SK-N-SH (cell line): ENCODE measurements at regions of chr15 and their contacts with region 1.

Region 1: DNA sequence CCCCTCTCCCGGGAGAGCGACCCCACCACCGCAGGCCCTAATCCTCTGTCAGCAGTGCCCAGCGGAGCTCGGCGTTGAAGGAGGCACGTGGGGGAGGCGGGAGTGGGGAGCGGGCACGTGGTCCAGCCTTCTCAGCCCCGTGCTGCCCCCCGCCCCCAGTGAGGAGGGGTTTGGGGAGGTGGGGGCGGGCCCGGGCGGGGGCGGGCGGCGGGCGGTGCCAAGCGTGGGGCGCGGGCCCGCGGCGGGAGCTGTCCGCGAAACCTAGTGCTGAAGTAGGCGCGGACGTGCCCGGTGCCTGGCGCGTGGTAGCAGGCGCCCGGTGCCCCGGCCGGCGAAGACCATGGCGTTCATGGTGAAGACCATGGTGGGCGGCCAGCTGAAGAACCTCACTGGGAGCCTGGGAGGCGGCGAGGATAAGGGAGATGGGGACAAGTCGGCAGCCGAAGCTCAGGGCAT is at the start of gene CPLX3:
- DNase-seq: peak; percentile 62
- H3K4me3 ChIP-seq: no peak within 1 kb of the TSS
- H3K27ac ChIP-seq: no peak within 1 kb of the TSS
- H3K4me1 ChIP-seq: peaks cover 0 to 20% of the 10 kb centered on the region in 2 experiments; a peak in 1 of 4 replicates
- H3K27me3 ChIP-seq: peaks cover 24% of the 10 kb centered on the region; the same call in 1 of the 2 replicates
- CTCF ChIP-seq: no peak
- EP300 ChIP-seq: no peak
- RAD21 ChIP-seq: no peak
- polyA plus RNA-seq, gene CPLX3: not detected in 2 replicates

Region 2: DNA sequence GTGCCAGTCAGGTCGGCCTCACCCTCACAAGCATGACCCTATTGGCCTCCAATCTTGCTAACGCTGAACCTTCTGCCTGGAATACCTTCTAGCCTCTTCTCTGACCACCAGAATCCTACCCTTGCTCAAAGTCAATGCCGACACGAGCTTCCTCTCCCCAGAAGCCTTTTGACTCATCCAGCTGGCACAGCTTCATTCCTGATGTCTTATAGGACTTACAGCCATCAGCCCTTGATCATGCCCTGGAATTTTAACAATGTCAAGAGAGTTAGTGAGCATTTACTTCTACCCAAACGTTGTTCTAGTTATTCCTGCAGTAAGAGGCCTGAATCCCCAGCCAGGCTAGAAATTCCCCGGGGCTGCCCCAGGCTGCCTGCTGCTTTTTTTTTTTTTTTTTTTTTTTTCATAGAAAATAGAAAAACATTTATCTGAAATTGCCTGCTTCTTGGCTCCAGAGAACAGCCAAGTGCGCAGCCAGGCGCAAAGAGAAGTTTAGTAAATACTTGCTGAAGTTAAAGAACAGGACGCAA is 73.8 kb before region 1 on chr15:
- CTCF ChIA-PET with region 1: no interaction called
- POLR2A ChIA-PET with region 1: no interaction called
- DNase-seq: no peak
- H3K4me3 ChIP-seq: no peak overlapping the region
- H3K27ac ChIP-seq: no peak overlapping the region
- H3K4me1 ChIP-seq: no peaks in the 10 kb centered on the region
- H3K27me3 ChIP-seq: no peaks in the 10 kb centered on the region
- CTCF ChIP-seq: no peak
- EP300 ChIP-seq: no peak
- RAD21 ChIP-seq: no peak

Region 3: GRCh38 chr15:74842581-74843444 is 16.4 kb after region 1 on chr15 and contains the start of gene ULK3:
- CTCF ChIA-PET with region 1: interaction called, 12 read pairs
- POLR2A ChIA-PET with region 1: no interaction called
- DNase-seq: peak; percentile 99
- H3K4me3 ChIP-seq: peak within 1 kb of the TSS; percentile 98
- H3K27ac ChIP-seq: peak within 1 kb of the TSS; percentile 72 to 88
- H3K4me1 ChIP-seq: peaks cover 0 to 23% of the 10 kb centered on the region in 2 experiments; a peak in 2 of 4 replicates
- H3K27me3 ChIP-seq: no peaks in the 10 kb centered on the region
- CTCF ChIP-seq: peak; percentile 50
- EP300 ChIP-seq: no peak
- RAD21 ChIP-seq: peak; percentile 34; the same call in 1 of the 2 replicates
- polyA plus RNA-seq, gene ULK3: 41.3 and 55.3 TPM in 2 replicates